ENCODE measurements at regions of chr20 and their contacts with region 1.

Region 1: GRCh38 chr20:62073323-62073722 is 7.6 kb upstream of the TAF4 start:
- DNase-seq: peak; percentile 0

Region 2: DNA sequence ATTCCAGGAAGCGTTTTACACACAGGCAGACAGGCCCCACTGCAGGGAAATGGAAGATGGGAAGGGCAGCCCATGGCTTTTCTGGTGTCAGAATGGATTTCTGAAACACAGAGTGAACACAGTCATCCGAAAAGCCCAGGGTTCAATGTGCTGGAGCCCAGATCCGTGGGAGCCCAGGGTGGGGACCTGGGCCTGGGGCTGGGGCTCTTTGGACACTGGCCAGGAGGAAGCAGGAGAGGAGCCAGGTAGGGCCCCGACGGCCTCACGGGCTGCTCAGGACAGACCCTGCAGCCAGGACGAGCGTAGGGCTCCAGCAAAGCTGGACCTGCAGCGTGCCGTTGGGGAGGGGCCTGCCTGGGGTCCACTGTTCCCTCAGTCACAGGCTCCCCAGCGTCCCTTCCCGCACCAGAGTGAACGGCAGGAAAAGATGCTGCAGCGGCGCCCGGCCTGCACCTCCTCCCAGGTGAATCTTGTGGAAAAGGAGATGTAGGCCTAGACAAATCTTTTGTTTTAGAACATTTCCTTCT is 24.6 kb after region 1 on chr20:
- intact Hi-C with region 1: loop called in 1 of 2 experiments (anchors 1 kb)
- DNase-seq: no peak

Measured in posterior vena cava (tissue), 2 donors.